ENCODE measurements at regions of chr20 and their contacts with region 1.

Region 1: GRCh38 chr20:63973636-63974402 is 4.1 kb upstream of the ZNF512B start:
- DNase-seq: peak; percentile 83
- ATAC-seq: peak; percentile 67
- H3K4me3 ChIP-seq: no peak overlapping the region
- H3K4me3 Mint-ChIP-seq: no peak overlapping the region
- H3K27ac ChIP-seq: no peak overlapping the region
- H3K27ac Mint-ChIP-seq: no peak overlapping the region
- H3K4me1 ChIP-seq: peaks cover 20 to 32% of the 10 kb centered on the region in 2 donors
- H3K4me1 Mint-ChIP-seq: peaks cover 26% of the 10 kb centered on the region
- H3K27me3 ChIP-seq: no peaks in the 10 kb centered on the region
- H3K27me3 Mint-ChIP-seq: no peaks in the 10 kb centered on the region
- CTCF ChIP-seq: peak; percentile 98

Region 2: DNA sequence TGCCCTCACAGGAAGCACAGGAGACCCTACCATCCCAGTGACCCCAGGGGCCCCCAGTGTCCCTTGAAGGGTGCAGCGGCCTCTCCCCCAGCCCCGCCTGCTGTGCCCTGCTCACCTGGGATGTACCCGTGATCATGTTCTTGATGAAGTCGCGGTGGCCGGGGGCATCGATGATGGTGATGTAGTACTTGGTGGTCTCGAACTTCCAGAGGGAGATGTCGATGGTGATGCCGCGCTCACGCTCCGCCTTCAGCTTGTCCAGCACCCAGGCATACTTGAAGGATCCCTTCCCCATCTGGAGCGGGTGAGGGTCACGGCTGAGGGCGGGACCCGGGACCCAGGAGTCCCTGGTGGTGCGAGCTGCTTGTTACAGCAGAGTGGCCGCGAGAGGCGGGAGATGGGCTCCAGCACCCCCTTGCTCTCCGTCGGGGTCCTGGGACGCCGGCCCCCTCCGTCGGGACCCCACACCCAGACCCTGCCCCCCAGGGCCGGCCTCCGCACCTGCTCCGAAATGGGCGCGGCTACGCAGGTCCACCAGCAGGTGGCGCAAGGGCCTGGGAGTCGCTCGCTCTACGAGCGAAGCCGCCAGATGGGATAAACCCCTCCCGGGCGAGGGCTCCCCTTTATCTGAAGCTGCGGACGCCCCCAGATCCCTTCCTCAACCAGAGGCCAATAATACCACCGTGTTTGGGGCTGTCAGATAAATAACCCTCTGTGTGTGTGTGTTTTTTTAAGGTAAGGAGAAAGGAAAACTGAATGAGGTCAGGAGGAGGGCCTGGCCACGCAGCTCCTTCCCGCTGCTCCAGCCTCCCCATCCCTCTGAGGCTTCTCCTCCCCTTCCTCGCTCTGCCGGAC is 477.9 kb before region 1 on chr20:
- CTCF ChIA-PET with region 1: interaction called, 26 read pairs
- POLR2A ChIA-PET with region 1: interaction called, 7 read pairs
- intact Hi-C with region 1: loop called (anchors 1 kb)
- DNase-seq: peak; percentile 84
- ATAC-seq: peak; percentile 66
- H3K4me3 ChIP-seq: peak overlapping the region in 4 of 5 experiments; percentile 8 to 40 (median 34)
- H3K4me3 Mint-ChIP-seq: peak overlapping the region; percentile 79
- H3K27ac ChIP-seq: no peak overlapping the region
- H3K27ac Mint-ChIP-seq: no peak overlapping the region
- H3K4me1 ChIP-seq: peaks cover 19 to 26% of the 10 kb centered on the region in 2 donors
- H3K4me1 Mint-ChIP-seq: peaks cover 7% of the 10 kb centered on the region
- H3K27me3 ChIP-seq: peaks cover 0 to 40% (median 16%) of the 10 kb centered on the region in 4 experiments
- H3K27me3 Mint-ChIP-seq: peaks cover 11% of the 10 kb centered on the region
- CTCF ChIP-seq: peak; percentile 95

Region 3: GRCh38 chr20:63785691-63786131 is 188.1 kb before region 1 on chr20:
- CTCF ChIA-PET with region 1: interaction called, 24 read pairs
- POLR2A ChIA-PET with region 1: no interaction called
- intact Hi-C with region 1: loop called (anchors 1 kb)
- DNase-seq: no peak
- ATAC-seq: no peak
- H3K4me3 ChIP-seq: no peak overlapping the region
- H3K4me3 Mint-ChIP-seq: no peak overlapping the region
- H3K27ac ChIP-seq: no peak overlapping the region
- H3K27ac Mint-ChIP-seq: no peak overlapping the region
- H3K4me1 ChIP-seq: no peaks in the 10 kb centered on the region
- H3K4me1 Mint-ChIP-seq: peaks cover 3% of the 10 kb centered on the region
- H3K27me3 ChIP-seq: no peaks in the 10 kb centered on the region
- H3K27me3 Mint-ChIP-seq: no peaks in the 10 kb centered on the region
- CTCF ChIP-seq: no peak

Region 4: DNA sequence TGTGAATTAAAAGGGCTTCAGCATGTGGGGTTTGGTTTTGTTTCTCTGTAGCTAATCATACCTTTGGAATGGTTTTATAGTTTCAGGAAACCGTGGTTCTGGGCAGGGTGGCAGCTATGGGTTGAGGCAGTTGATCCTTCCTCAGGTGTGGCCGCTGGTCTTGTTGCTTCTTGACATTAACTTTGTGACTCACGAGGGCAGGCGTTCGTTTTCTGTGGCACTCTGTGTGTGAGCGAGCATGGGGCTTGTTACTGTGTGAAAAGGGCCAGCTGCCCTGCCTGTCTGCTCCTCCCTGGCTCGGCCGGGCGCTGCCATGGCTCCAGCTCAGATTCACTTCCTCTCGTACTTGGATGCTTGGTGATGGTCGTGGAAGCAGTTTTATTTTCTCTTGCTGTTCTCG is 62.6 kb before region 1 on chr20:
- CTCF ChIA-PET with region 1: interaction called, 22 read pairs
- POLR2A ChIA-PET with region 1: no interaction called
- intact Hi-C with region 1: no loop called
- DNase-seq: no peak
- ATAC-seq: no peak
- H3K4me3 ChIP-seq: no peak overlapping the region
- H3K4me3 Mint-ChIP-seq: no peak overlapping the region
- H3K27ac ChIP-seq: no peak overlapping the region
- H3K27ac Mint-ChIP-seq: no peak overlapping the region
- H3K4me1 ChIP-seq: peaks cover 4 to 17% of the 10 kb centered on the region in 2 donors
- H3K4me1 Mint-ChIP-seq: peaks cover 38% of the 10 kb centered on the region
- H3K27me3 ChIP-seq: no peaks in the 10 kb centered on the region
- H3K27me3 Mint-ChIP-seq: no peaks in the 10 kb centered on the region
- CTCF ChIP-seq: no peak

Region 5: GRCh38 chr20:64051561-64052325 is 77.9 kb after region 1 on chr20:
- CTCF ChIA-PET with region 1: no interaction called
- POLR2A ChIA-PET with region 1: no interaction called
- intact Hi-C with region 1: no loop called
- DNase-seq: no peak
- ATAC-seq: no peak
- H3K4me3 ChIP-seq: no peak overlapping the region
- H3K4me3 Mint-ChIP-seq: no peak overlapping the region
- H3K27ac ChIP-seq: no peak overlapping the region
- H3K27ac Mint-ChIP-seq: no peak overlapping the region
- H3K4me1 ChIP-seq: peaks cover 9 to 11% of the 10 kb centered on the region in 2 donors
- H3K4me1 Mint-ChIP-seq: peaks cover 10% of the 10 kb centered on the region
- H3K27me3 ChIP-seq: peaks cover 0 to 73% (median 31%) of the 10 kb centered on the region in 4 experiments
- H3K27me3 Mint-ChIP-seq: peaks cover 35% of the 10 kb centered on the region
- CTCF ChIP-seq: no peak